ENCODE measurements at regions of chr1 and their contacts with region 1.

Region 1: DNA sequence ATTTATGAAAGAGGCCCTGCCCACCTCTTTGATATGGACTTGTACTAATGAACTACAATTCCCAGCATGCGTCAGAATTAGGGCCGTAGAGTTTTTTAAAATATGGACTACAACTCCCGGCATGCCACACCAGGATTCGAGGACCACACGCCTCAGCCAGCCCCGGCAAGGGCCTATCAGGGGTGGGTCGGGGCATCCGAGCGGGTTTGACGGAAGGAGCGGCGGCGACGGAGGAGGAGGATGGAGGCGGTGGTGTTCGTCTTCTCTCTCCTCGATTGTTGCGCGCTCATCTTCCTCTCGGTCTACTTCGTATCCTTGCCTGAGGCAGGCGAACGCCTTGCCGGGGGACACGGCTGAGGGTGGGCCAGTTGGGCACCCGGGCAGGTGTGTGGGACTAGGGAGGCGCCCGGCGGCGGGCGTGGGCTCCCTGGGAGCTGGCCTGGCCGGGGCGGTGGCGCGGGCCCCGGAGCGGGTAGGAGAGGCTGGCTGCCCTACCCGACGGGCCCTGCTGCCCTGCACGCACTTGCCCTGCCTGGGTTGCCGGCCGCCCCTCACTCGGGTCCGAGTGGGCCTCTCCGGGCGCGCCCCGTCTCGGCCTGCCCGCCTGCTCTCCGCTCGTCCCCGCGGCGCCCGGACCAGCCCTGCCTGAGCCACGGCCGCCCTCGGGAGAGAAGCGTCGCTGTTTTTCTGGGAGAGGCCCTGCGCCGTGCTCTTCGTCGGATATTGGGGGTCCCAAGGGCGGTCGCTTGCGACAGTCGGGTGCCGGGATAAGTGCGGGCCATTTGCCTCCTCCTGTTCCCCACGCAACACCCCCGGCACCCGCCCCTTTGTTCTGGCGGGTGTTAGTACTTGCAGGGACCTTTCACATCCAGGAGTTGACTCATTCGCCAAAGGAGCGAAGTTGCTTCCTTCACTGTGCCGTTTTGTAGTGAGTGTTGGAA is at the start of gene CNIH4:
- DNase-seq: peak; percentile 76
- ATAC-seq: peak; percentile 99
- H3K4me3 Mint-ChIP-seq: peak within 1 kb of the TSS; percentile 91
- H3K27ac Mint-ChIP-seq: peak within 1 kb of the TSS; percentile 81
- H3K4me1 Mint-ChIP-seq: peaks cover 24% of the 10 kb centered on the region
- H3K27me3 Mint-ChIP-seq: no peaks in the 10 kb centered on the region
- CTCF ChIP-seq: no peak
- total RNA-seq, gene CNIH4: 16.2 and 21.0 TPM in 2 replicates

Region 2: DNA sequence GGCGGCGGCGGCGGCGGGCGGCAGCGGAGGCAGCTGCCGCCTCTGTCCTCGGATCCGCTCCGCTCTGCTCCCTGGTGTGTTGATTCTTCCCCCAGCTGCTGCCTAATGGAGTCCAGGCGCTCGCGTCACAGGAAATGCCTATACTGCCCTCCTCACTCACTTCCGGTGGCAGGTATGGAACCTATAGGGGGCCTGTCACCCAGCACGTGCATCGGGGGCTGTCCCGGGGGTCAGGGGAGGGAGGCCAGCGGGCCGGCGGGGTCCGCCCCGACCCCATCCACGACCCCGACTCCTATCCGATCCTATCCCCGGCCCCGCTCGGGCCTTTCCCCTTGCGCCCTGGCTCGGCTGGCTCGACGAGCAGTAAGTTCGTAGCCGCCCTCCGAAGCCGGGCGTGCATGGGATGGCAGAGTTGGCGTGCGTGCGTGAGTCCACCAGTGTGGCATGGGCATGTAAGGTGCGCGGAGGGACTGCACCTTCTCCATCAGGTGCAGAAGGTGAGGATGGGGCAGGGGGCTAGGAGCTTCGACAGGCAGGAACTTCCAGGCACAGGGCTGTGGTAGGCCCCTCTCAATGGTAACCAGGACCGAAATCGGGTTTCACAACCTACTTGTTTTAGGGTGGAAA is 77.8 kb after region 1 on chr1 and contains the start of gene WDR26:
- CTCF ChIA-PET with region 1: no interaction called
- POLR2A ChIA-PET with region 1: interaction called, 3 read pairs
- intact Hi-C with region 1: loop called (anchors 1 kb)
- DNase-seq: peak; percentile 74
- ATAC-seq: peak; percentile 85
- H3K4me3 Mint-ChIP-seq: peak within 1 kb of the TSS; percentile 96
- H3K27ac Mint-ChIP-seq: peak within 1 kb of the TSS; percentile 97
- H3K4me1 Mint-ChIP-seq: peaks cover 47% of the 10 kb centered on the region
- H3K27me3 Mint-ChIP-seq: no peaks in the 10 kb centered on the region
- CTCF ChIP-seq: no peak
- total RNA-seq, gene WDR26: 75.3 and 91.3 TPM in 2 replicates

Measured in activated B cell treated with CpG ODN at 0.5 μM for 24 hours (primary cell).